Left ventricle myocardium superior (tissue), 1 donor: ENCODE measurements at regions of chr12 and their contacts with region 1.

Region 1: DNA sequence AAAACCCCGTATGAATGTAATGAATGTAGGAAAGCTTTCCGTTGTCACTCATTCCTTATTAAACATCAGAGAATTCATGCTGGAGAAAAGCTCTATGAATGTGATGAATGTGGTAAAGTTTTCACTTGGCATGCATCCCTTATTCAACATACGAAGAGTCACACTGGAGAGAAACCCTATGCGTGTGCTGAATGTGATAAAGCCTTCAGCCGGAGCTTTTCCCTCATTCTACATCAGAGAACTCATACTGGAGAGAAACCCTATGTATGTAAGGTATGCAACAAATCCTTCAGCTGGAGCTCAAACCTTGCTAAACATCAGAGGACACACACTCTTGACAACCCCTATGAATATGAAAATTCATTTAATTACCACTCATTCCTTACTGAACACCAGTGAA is 23.8 kb downstream of the ZNF891 start:
- DNase-seq: no peak
- ATAC-seq: no peak

Region 2: GRCh38 chr12:133046698-133047097 is 59.6 kb before region 1 on chr12:
- intact Hi-C with region 1: loop called (anchors 5 kb)
- DNase-seq: no peak
- ATAC-seq: no peak

Region 3: DNA sequence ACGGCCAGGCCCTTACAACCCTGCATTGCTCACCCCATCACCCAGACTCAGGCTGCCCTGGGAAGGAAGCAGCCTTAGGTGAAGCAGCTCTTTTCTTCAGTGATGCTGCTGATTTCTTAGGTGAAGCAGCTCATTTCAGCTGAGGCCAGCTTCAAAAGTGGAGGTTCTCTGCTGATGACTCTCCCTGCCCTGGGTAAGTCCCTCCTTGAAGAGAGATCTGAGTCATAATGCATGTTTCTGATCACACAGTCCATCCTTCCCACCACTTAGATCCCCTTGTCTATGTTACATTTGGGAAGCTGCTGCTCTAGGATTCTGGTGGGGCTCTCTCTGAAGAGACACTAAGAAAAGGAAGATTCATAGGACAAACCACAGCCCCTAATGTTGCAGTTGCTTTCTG is 42.7 kb before region 1 on chr12:
- intact Hi-C with region 1: loop called (anchors 5 kb)
- DNase-seq: no peak
- ATAC-seq: no peak

Region 4: DNA sequence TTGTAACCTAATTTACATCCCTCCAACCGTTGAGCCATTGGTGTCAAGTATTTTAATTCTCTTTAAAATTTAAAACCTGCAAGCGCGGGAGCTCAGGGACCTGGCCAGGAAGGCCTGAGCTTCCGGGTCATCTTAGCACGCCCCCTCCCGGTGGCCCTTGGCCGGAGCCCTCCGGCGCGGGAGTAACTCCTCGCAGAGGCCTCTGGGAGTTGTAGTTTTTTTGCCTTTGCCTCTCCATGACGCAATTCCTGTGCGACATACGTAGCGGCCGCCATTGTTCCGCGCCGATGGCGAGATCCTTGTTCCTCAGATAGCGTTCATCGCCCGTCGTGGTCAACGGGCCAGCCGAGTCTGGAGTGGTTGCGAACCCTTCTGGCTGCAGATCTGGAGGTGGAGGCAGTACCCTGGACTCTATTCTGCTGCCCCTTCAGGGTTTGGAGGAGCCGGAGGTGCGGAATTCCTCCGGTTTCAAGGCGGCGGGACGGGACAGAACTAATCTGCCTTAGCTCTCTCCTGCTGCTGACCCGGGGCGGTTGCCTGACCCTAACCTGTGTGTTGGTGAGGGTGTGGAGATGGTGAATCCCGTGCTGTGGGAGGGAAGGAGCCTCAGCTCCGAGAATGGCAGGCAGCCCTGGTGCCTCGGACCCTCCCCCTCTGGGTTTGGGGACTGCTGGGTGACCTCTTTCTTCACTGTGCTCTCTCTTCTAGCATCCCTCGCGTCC is 75.1 kb after region 1 on chr12 and contains the start of gene ZNF268:
- intact Hi-C with region 1: no loop called
- DNase-seq: peak; percentile 95
- ATAC-seq: peak; percentile 98
- total RNA-seq, gene ZNF268: 9.6 TPM